Right ventricle myocardium inferior (tissue), 1 donor: ENCODE measurements at regions of chr9 and their contacts with region 1.

Region 1: DNA sequence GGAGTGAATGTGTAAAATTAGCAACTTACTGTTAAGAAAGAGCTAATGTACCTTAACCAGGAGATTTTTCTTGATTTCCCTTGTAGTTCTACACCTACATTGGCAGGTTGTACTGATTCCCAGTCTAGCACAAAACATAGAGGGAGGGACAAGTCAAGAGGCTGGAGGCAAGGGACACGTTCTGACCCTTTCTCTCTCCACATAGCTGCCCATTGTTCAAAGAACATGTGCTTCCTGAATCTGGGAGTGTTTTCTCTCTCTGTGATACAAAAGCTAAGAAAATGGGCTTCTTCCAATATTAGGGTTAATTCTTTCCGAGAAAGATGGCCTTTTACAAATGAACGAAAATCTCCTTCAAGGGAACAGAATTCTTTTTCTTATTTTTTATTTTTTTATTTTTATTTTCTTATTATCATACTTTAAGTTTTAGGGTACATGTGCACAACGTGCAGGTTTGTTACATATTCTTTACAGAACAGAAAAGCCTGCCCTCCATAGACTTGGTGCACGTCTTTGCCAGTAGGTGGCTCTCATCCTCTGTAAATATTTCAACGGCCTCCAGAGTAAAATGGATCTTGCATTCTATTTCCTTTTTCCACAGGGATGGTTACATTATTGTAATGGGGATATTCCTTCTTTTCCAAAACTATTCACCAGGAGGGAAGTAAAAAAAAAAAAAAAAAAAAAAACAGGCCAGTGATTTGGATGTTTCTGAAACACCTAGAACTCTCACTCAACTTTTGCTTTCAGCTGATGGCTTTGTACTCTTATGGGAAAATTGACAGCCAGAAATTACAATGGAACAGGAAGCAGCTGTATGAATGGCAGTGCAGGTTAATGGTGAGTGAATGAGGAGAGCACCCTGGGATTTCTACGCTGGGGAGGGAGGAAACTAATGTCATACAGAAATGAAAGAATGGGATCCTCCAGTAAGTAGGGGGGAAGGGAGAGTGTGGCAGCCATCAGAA is 13.1 kb upstream of the IFNA5 start:
- DNase-seq: no peak
- ATAC-seq: peak; percentile 63

Region 2: GRCh38 chr9:21395778-21396717 is 77.8 kb after region 1 on chr9:
- intact Hi-C with region 1: loop called (anchors 5 kb)
- DNase-seq: peak; percentile 82
- ATAC-seq: peak; percentile 63

Region 3: DNA sequence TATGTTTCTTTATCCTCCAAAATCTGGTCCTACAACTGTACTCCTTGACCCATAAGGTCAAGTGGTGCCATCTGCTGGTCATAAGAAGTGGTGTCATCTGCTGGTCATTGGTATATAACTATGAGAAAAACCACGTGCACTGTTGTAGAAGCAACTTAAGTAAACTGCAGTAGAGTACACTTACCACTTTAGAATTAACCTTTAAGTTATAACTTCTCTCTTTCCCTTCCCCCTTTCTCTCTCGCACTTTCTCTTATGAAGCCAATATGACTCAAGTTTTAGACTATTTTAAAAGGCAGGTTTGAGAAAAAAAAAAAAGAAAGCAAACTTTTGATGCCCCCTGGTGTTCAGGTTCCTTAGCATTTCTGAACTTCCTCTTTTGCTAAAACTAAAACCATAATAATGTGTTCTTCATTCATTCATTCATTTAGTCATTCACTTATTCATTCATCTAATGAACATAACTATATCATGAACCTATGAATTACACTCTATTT is 471.3 kb after region 1 on chr9:
- intact Hi-C with region 1: loop called (anchors 1 kb)
- DNase-seq: no peak
- ATAC-seq: peak; percentile 82